ENCODE measurements at regions of chr16 and their contacts with region 1.

Region 1: GRCh38 chr16:69565671-69566239 is at the start of gene NFAT5:
- DNase-seq: peak; percentile 92 to 99
- ATAC-seq: peak; percentile 71 to 93 (median 80)
- H3K4me3 ChIP-seq: peak within 1 kb of the TSS; percentile 91
- H3K4me3 Mint-ChIP-seq: peak within 1 kb of the TSS; percentile 96
- H3K27ac ChIP-seq: peak within 1 kb of the TSS; percentile 93
- H3K27ac Mint-ChIP-seq: peak within 1 kb of the TSS; percentile 97 to 98
- H3K4me1 ChIP-seq: peaks cover 23% of the 10 kb centered on the region
- H3K4me1 Mint-ChIP-seq: peaks cover 51% of the 10 kb centered on the region in 2 donors
- H3K27me3 ChIP-seq: no peaks in the 10 kb centered on the region
- H3K27me3 Mint-ChIP-seq: no peaks in the 10 kb centered on the region
- CTCF ChIP-seq: no peak
- total RNA-seq, gene NFAT5: 70.0 to 73.6 (median 70.6) TPM

Region 2: GRCh38 chr16:69386596-69386995 is 179.2 kb before region 1 on chr16:
- intact Hi-C with region 1: loop called (anchors 5 kb)
- DNase-seq: no peak
- ATAC-seq: no peak
- H3K4me3 ChIP-seq: no peak overlapping the region
- H3K4me3 Mint-ChIP-seq: peak overlapping the region; percentile 97
- H3K27ac ChIP-seq: peak overlapping the region; percentile 68
- H3K27ac Mint-ChIP-seq: peak overlapping the region in 1 of 2 donors; percentile 89
- H3K4me1 ChIP-seq: peaks cover 10% of the 10 kb centered on the region
- H3K4me1 Mint-ChIP-seq: peaks cover 31 to 35% of the 10 kb centered on the region in 2 donors
- H3K27me3 ChIP-seq: no peaks in the 10 kb centered on the region
- H3K27me3 Mint-ChIP-seq: no peaks in the 10 kb centered on the region
- CTCF ChIP-seq: no peak

Region 3: DNA sequence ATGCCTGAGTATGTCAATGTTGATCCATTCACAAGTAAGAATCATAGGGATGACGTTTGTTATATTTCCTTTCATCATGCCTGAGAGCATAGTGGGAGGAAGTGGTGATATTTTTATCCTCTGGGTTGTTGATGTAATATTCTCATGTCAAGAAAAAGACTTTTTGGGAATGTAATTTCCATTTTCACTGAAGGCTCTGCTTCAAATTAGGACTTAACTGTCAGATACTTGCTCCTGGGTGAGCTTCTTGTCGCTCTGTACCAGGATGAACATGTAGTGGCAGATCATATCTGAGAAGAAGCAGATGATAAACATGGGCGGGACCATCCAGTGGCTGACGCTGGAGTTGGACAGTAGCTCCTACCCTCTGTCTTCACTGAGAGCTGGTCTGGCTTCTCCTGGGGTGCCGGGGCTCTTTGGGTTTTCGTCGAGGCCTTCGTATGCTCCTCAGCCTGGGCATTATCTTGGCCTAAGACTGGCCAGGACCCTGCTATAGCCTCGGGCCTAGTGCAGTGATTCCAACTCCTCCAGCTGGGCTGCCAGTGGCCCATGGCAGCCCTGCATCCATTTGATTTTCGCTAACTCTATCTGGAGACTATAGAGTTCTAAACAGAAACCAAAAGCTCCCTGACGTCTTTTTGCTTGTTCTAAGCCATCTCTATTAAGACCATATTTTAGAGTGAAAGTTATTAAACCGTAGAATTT is 121.7 kb before region 1 on chr16:
- intact Hi-C with region 1: loop called (anchors 2 kb)
- DNase-seq: peak; percentile 48 to 57
- ATAC-seq: peak; percentile 81 to 88 (median 82)
- H3K4me3 ChIP-seq: peak overlapping the region; percentile 30
- H3K4me3 Mint-ChIP-seq: peak overlapping the region; percentile 90
- H3K27ac ChIP-seq: peak overlapping the region; percentile 98
- H3K27ac Mint-ChIP-seq: peak overlapping the region; percentile 97 to 99
- H3K4me1 ChIP-seq: peaks cover 10% of the 10 kb centered on the region
- H3K4me1 Mint-ChIP-seq: peaks cover 34 to 49% of the 10 kb centered on the region in 2 donors
- H3K27me3 ChIP-seq: no peaks in the 10 kb centered on the region
- H3K27me3 Mint-ChIP-seq: no peaks in the 10 kb centered on the region
- CTCF ChIP-seq: no peak

Region 4: DNA sequence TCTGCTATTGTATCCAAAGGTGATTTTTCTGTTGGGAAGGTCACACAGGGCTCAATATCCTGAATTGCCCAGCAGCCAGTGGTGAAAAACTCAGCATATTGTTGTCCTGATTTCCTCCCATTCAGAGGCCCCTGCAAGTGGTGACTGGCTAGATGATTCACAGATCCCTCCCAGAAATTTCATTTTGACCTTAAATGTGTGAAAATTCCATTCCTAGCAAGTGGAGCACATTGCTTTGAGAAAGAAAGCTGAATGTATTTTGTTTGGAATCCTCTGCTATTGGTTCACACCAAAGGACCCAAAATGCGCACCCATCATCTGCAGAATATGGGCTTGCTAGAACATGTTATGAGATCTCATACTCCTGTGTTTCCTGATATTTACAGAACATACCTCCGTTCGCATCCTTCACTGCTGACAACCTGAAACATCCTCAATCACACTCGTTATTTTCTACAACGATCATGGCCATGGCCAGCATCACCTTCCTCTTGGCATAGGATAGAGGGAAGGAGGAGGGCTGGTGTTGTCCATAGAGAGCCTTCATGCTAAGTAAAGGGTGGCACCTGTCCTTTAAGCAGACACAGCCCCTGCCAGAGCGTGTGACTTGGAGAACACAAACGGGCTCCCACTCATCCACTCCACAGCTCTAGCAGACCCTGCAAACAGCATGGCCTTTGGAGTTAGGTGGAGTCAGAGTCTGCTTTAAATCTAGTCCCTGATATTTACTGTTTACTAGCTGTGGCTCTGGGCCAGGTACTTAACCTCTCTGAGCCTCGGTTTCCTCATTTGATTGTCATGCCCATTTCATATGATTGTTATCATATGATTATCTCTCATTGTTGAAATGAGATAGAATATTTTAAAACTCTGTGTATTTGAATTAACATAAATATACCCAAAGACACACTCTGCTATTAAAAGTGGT is 30.4 kb before region 1 on chr16:
- intact Hi-C with region 1: loop called (anchors 1 kb)
- DNase-seq: no peak
- ATAC-seq: no peak
- H3K4me3 ChIP-seq: no peak overlapping the region
- H3K4me3 Mint-ChIP-seq: no peak overlapping the region
- H3K27ac ChIP-seq: no peak overlapping the region
- H3K27ac Mint-ChIP-seq: no peak overlapping the region
- H3K4me1 ChIP-seq: peaks cover 6% of the 10 kb centered on the region
- H3K4me1 Mint-ChIP-seq: peaks cover 11 to 15% of the 10 kb centered on the region in 2 donors
- H3K27me3 ChIP-seq: no peaks in the 10 kb centered on the region
- H3K27me3 Mint-ChIP-seq: peaks cover 0 to 10% of the 10 kb centered on the region in 2 donors
- CTCF ChIP-seq: no peak